Sciatic nerve (tissue), 2 donors: ENCODE measurements at regions of chr2 and their contacts with region 1.

Region 1: DNA sequence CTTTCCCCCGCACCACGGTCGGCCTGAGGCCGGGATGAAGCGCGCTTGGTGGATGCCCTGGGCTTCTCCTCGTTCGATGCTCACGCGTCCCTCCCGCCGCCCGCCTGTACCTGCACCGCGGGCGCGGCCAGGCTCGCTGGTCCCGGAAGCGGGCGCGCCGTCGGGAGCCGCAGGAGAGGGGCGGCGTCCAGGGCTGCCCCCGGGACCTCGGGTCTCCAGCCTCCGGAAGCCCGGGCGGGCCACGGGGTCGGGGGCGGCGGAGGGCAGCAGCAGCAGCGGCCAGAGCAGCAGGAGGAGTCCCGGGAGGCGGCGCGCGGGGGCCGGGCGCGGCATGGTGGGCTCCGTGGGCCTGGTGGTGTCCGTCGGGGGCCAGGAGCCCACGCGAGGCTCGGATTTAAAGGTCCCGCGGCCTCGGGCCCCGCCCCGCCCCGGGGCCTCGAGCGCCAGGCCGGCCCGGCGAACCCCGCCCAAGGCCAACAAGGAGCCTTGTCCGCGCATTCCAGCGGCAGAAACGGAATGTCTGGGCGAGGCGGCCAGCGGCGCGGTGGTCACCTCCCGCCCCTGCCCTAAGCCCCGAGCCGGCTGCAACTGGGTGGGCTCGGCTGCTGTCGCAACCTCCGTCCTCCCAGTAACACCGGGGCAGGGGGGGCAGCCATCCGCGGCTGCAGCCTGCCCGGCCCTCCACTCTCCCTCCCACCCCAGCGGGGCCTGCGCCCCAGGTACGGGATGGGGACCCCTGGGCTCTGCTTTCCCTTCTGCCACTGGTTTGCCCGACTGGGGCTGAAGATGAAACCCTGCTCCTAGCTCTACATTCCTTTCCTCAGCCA is at the start of gene MATN3:
- DNase-seq: peak; percentile 66
- ATAC-seq: peak; percentile 73
- total RNA-seq, gene MATN3: 8.8 TPM

Region 2: DNA sequence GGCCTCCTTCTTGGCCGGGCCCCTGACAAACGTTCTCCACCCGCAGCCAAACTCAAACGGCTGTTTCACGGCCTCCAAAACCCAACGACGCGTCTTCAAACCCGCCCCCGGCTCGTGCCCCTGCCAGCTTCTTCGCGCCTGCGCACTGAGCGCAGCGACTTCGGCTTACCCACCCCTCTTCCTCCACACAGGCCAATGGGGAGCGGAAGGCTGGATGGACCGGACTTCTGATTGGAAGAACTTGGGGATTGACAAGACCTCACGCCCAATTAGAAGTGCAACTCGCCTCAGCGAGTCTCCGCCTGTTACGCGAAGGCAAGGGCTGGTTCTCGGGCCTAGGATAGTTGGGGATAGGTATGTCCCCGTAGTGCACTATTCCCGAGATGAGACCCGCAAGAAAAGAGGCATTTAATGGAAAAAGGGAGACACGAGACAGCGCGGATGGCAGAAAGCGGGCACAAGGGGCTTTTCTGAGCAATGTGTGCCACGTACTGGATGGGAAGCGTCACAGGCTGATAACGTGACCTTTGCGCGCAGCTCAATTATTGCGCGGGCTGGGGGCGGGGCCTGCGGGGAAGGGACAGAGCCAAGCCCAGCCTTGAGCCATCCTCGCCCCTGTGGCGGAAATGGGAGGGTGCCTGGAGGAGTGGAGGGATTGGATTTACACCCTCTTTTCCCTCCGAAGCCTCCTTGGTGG is 39.2 kb after region 1 on chr2 and contains the start of gene LAPTM4A:
- intact Hi-C with region 1: no loop called
- DNase-seq: peak; percentile 99
- ATAC-seq: peak; percentile 98
- total RNA-seq, gene LAPTM4A: 253 TPM

Region 3: DNA sequence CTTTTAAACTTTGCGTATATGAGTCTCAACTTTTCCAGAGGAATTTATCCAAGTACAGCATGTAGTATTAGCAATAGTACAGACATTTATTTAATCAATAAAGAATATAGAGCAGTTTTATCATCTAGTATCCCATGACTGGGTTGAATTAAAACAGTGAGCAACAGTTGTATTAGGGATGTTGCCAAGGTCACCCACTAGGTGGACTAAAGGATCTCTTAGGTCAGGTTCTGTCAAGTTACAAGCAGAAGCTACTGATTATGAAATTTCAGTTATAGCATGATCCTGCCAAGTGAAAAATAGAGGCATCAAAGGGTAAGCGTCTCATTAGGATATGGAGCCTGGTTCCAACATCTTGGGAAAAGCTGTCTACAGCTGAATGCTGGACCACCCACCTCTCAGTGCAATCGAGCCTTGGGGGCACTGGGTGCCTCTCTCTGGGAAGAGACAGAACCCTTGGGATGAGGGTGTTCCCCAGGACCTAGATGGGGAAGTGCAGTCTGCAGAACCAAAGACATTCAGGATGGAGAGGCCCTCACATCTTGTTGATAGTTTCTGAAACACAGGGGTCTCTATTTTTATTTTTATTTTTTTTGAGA is 91.1 kb after region 1 on chr2:
- intact Hi-C with region 1: loop called (anchors 5 kb)
- DNase-seq: no peak
- ATAC-seq: no peak